ENCODE measurements at regions of chr9 and their contacts with region 1.

Region 1: DNA sequence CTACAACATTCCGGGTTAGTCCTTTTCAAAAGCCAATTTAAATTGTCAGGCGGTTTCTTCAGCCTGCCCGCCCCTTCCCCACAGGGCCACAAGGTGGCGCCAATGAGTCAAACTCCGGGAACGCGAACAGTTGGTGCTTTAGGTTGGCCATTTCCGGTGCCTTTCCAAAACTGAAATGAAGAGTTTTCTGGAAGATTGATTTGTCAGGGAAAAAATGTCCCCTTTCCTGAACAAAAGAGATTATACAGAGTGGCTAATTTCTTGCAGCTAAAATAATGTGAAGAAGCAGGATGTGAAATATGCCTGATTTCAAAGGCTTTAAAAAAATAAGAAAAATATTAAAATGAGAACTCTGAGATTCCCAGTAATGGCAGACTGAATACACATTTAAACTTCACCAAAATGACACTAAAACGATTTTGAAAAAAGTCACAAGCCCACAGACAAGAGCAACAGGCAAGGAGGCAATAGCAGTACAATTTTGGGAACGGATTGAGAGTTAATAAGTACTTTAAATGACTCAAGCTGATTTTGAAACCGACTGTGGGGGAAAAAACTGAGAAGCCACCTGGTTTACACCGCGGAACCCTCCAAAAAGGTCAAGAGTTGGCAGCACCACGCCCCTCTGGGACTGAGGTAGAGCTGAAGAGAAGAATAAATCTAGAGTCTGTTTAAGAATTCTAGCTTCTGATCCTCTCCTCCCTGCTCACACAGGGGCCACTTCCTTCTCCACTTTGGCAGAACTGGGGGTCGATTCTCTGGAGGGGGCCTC is 45.7 kb downstream of the SLC46A2 start:
- DNase-seq: peak; percentile 82
- CTCF ChIP-seq: peak; percentile 97

Region 2: DNA sequence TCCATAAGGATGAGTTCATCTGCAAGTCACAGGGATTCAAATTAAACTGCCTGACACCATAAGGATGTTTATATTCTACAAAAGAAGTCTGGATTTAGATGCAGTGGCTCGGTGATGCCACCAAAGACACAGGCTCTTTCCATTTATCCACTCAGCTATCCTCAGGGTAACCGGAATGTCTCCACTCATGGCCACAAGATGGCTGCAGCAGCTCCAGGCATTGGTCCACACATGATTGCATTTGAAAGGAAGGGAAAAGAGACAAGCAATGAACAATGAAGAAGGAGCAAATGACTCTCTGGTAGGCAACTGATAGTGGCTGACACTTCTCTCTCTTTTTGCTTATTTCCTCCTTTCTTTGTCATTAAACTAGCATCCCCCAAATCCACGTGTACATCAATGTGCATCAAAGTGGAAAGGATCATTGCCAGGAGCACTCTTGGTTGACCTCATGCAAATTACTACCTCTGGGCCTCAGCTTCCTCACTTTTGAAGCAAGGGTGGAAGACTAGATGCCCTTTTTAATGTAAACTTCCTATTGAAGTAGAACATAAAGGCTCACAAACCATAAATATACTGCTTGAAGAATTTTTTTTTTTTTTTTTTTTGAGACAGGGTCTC is 101.6 kb before region 1 on chr9:
- CTCF ChIA-PET with region 1: no interaction called
- POLR2A ChIA-PET with region 1: no interaction called
- DNase-seq: no peak
- CTCF ChIP-seq: no peak

Region 3: GRCh38 chr9:112858625-112859147 is 13.7 kb after region 1 on chr9:
- CTCF ChIA-PET with region 1: interaction called, 25 read pairs
- POLR2A ChIA-PET with region 1: no interaction called
- DNase-seq: peak; percentile 65
- CTCF ChIP-seq: no peak

Region 4: GRCh38 chr9:112900899-112901298 is 55.9 kb after region 1 on chr9:
- CTCF ChIA-PET with region 1: interaction called, 91 read pairs
- POLR2A ChIA-PET with region 1: no interaction called
- DNase-seq: no peak
- CTCF ChIP-seq: no peak

Region 5: GRCh38 chr9:113011911-113012381 is 167.0 kb after region 1 on chr9 and contains the start of gene ZNF883:
- CTCF ChIA-PET with region 1: no interaction called
- POLR2A ChIA-PET with region 1: no interaction called
- DNase-seq: peak; percentile 7
- CTCF ChIP-seq: no peak